Activated B cell treated with CpG ODN at 0.5 μM for 24 hours (primary cell): ENCODE measurements at regions of chrX and their contacts with region 1.

Region 1: DNA sequence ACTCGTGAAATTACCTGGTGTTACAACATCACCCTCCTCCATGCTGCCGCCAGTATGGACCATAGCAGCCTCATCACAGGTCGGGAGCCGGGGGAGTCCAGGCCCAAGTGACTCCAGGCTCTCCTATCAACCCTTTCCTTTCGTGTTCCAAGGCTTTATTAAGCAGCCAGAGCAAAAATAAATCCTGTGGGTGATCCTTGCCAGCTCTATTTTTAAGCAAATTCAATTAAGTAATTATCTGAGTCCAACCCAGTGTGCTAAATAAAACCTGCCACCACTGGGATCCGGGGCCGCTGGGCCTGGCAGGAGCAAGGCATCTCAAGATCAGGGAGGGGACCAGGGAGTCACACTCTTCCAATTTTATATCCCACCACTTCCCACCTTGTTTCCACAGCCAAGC is 80.7 kb upstream of the PRPS1 start:
- DNase-seq: no peak
- ATAC-seq: no peak
- H3K4me3 Mint-ChIP-seq: no peak overlapping the region
- H3K27ac Mint-ChIP-seq: no peak overlapping the region
- H3K4me1 Mint-ChIP-seq: no peaks in the 10 kb centered on the region
- H3K27me3 Mint-ChIP-seq: no peaks in the 10 kb centered on the region
- CTCF ChIP-seq: no peak

Region 2: GRCh38 chrX:107576841-107577240 is 29.2 kb after region 1 on chrX:
- CTCF ChIA-PET with region 1: no interaction called
- POLR2A ChIA-PET with region 1: no interaction called
- intact Hi-C with region 1: loop called (anchors 1 kb)
- DNase-seq: no peak
- ATAC-seq: no peak
- H3K4me3 Mint-ChIP-seq: no peak overlapping the region
- H3K27ac Mint-ChIP-seq: no peak overlapping the region
- H3K4me1 Mint-ChIP-seq: no peaks in the 10 kb centered on the region
- H3K27me3 Mint-ChIP-seq: no peaks in the 10 kb centered on the region
- CTCF ChIP-seq: no peak